Mammary epithelial cell (primary cell): ENCODE measurements at regions of chr12 and their contacts with region 1.

Region 1: DNA sequence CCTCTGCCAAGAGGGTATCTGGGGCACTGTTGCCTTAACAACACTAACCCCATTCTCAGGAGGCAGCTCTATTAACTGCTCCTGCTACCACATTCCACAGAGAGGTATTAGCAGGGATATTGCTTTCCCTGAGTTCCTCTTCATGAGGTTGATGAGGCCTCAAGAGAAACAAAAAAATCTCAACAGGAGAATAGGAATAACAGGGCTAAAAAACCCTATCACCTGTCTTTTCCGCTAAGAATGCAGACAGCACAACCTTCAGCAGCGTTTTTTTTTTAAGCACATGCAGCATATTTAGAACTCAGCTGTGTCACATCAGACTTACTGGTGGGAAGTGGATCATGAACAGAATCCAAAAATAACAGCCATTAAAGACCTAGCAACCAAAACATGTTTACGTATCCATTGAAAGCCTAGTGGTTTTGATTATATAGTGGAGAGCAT is 29.2 kb downstream of the ATF7 start:
- DNase-seq: no peak
- H3K4me3 ChIP-seq: no peak overlapping the region
- H3K27ac ChIP-seq: no peak overlapping the region
- H3K4me1 ChIP-seq: no peaks in the 10 kb centered on the region
- H3K27me3 ChIP-seq: no peaks in the 10 kb centered on the region
- CTCF ChIP-seq: no peak

Region 2: GRCh38 chr12:53625946-53626701 is 29.2 kb after region 1 on chr12 and contains the start of gene ATF7:
- CTCF ChIA-PET with region 1: no interaction called
- dilution Hi-C with region 1: no loop called
- in situ Hi-C with region 1: no loop called
- intact Hi-C with region 1: loop called (anchors 2 kb)
- DNase-seq: peak; percentile 95
- H3K4me3 ChIP-seq: peak within 1 kb of the TSS; percentile 77 to 86 (median 83)
- H3K27ac ChIP-seq: peak within 1 kb of the TSS; percentile 96
- H3K4me1 ChIP-seq: peaks cover 18% of the 10 kb centered on the region
- H3K27me3 ChIP-seq: no peaks in the 10 kb centered on the region
- CTCF ChIP-seq: no peak
- total RNA-seq, gene ATF7: 11.2 to 26.5 TPM

Region 3: DNA sequence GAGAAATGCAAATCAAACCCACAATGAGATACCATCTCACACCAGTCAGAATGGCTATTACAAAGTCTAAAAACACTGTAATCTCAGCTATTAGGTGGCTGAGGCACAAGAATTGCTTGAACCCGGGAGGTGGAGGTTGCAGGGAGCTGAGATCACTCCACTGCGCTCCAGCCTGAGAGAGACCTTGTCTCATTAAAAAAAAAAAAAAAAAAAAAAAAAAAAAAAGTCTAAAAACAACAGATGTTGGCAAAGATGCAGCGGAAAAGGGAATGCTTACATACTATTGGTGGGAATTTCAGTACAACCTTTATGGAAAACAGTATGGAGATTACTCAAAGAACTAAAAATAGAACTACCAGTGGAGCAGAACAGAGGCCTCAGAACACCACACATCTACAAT is 48.2 kb after region 1 on chr12:
- CTCF ChIA-PET with region 1: interaction called, 25 read pairs
- dilution Hi-C with region 1: no loop called
- in situ Hi-C with region 1: no loop called
- intact Hi-C with region 1: no loop called
- DNase-seq: no peak
- H3K4me3 ChIP-seq: no peak overlapping the region
- H3K27ac ChIP-seq: no peak overlapping the region
- H3K4me1 ChIP-seq: no peaks in the 10 kb centered on the region
- H3K27me3 ChIP-seq: no peaks in the 10 kb centered on the region
- CTCF ChIP-seq: no peak